Motor neuron (in vitro differentiated cells): ENCODE measurements at regions of chr2 and their contacts with region 1.

Region 1: DNA sequence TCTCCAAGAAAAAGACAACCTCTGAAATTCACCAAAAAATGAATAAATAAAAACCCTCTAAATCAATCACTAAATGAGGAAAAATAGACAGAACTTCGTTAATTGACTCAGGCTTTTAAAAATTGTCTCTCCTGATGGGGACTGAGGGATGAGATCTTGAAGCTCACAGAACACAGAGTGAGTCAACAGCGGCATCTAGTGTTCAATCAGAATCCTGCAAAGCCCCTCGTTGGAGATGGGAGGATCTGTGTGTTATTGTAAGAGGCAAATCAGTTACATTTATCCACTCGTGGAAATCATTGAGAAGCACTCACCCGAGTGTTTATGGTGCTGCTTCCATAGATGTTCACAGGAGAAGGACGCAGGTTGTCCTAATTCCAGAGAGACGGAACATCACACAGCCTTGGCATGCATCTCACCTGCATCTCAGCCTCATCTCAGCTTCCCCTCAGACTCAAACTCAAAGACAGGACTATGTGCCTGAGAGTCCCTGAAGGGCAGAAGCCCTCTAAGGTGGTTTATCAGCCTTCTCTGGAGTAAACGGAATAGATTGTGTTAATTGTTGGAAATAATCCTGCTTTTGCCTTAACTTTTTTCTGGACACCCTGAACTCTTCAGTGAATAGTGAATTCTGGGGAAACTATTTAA is 82.0 kb downstream of the MREG start:
- ATAC-seq: peak; percentile 65 to 99 (median 83)
- H3K4me3 ChIP-seq: no peak overlapping the region
- H3K27ac ChIP-seq: no peak overlapping the region
- H3K4me1 ChIP-seq: no peaks in the 10 kb centered on the region

Region 2: GRCh38 chr2:214960677-214961076 is 970.7 kb before region 1 on chr2:
- in situ Hi-C with region 1: loop called in 1 of 9 experiments (anchors 25 kb)
- ATAC-seq: no peak
- H3K4me3 ChIP-seq: no peak overlapping the region
- H3K27ac ChIP-seq: no peak overlapping the region
- H3K4me1 ChIP-seq: no peaks in the 10 kb centered on the region

Region 3: GRCh38 chr2:215332872-215333595 is 598.3 kb before region 1 on chr2:
- in situ Hi-C with region 1: loop called in 1 of 9 experiments (anchors 25 kb)
- ATAC-seq: no peak
- H3K4me3 ChIP-seq: no peak overlapping the region
- H3K27ac ChIP-seq: no peak overlapping the region
- H3K4me1 ChIP-seq: no peaks in the 10 kb centered on the region